A549 (cell line): ENCODE measurements at regions of chr15 and their contacts with region 1.

Region 1: GRCh38 chr15:58070801-58071418 is 5.4 kb upstream of the ALDH1A2 start:
- DNase-seq: peak; percentile 13 to 68
- ATAC-seq: peak in 1 of 2 experiments; percentile 30; a peak in 1 of 6 replicates
- H3K4me3 ChIP-seq: no peak overlapping the region
- H3K27ac ChIP-seq: no peak overlapping the region
- H3K4me1 ChIP-seq: peaks cover 2% of the 10 kb centered on the region; the same call in 1 of the 3 replicates
- CTCF ChIP-seq: peak; percentile 95
- EP300 ChIP-seq: no peak
- POLR2A ChIP-seq: no peak
- RAD21 ChIP-seq: peak; percentile 79 to 88

Region 2: DNA sequence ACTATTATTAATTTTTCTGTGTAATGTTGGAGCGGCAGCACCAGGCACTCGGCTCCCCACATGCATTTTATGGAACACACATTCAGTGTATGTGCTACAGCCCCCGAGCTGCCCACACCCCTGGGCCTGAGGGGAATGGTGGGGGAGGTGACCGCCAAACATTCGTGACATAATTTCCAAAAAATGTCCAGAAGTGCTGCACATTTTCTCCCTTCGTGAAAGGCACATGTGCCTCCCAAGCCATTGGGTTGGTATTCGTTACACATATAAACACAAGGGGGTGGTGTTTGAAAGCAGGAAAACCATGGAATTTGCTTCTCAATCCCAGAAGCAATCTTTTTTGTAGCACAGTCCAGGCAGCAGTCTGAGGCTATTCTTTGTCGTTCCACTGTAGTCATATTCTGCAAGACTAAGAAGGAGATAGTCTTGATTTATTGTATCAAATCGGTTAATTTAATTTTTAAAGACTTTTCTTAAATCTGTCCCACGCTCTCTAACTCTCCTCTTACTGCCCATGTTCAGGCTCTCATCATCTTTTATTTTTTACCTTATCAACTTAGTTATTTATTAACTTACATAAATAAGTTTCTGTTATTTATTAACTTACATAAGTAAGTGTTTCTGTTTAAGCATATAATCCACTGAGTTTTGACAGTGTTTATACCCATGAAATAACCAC is 403.6 kb before region 1 on chr15:
- CTCF ChIA-PET with region 1: interaction called, 11 read pairs
- POLR2A ChIA-PET with region 1: no interaction called
- DNase-seq: peak; percentile 65 to 75
- ATAC-seq: peak; percentile 82 to 92
- H3K4me3 ChIP-seq: no peak overlapping the region
- H3K27ac ChIP-seq: no peak overlapping the region
- H3K4me1 ChIP-seq: peaks cover 18% of the 10 kb centered on the region
- CTCF ChIP-seq: peak; percentile 68
- EP300 ChIP-seq: no peak
- POLR2A ChIP-seq: no peak
- RAD21 ChIP-seq: peak; percentile 78 to 80

Region 3: GRCh38 chr15:57743424-57743823 is 327.5 kb before region 1 on chr15:
- CTCF ChIA-PET with region 1: interaction called, 18 read pairs
- POLR2A ChIA-PET with region 1: no interaction called
- DNase-seq: peak in 1 of 2 experiments; percentile 27
- ATAC-seq: peak; percentile 57 to 67; a peak in 5 of 6 replicates
- H3K4me3 ChIP-seq: no peak overlapping the region
- H3K27ac ChIP-seq: no peak overlapping the region
- H3K4me1 ChIP-seq: no peaks in the 10 kb centered on the region
- CTCF ChIP-seq: 0 out of 3 replicates have a peak, but pooled peaks have one; percentile 16
- EP300 ChIP-seq: no peak
- POLR2A ChIP-seq: no peak
- RAD21 ChIP-seq: peak; percentile 13 to 48; a peak in 1 of 5 replicates

Region 4: DNA sequence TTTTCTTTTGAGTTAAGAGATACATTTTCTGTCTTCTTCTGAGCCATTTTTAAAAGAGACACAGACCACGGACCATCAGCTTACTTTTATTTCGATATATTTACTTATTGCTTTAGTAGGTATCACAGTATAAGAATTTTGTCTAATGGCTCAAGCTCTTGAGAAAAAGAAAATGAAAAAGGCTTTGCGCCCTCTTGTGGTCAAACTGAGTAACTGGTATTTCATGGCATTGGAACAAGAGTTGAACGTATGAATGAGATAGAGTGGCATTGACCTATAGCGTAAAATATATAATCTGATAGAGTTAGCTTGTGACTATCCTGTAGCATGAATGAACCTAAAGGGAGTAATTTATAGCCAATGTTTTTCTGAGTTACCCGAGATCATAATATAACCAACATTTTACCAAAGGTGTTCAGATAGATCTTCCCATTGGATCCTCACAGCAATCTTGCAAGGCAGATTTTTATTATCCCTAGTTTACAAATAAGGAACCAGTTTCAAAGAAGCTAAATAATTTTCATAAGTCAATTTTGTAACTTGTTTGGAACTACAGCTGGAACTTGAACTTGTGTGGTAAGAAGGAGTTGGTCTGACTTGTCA is 209.8 kb before region 1 on chr15:
- CTCF ChIA-PET with region 1: interaction called, 27 read pairs
- POLR2A ChIA-PET with region 1: no interaction called
- DNase-seq: peak; percentile 28 to 74
- ATAC-seq: peak; percentile 28 to 78; a peak in 3 of 6 replicates
- H3K4me3 ChIP-seq: no peak overlapping the region
- H3K27ac ChIP-seq: no peak overlapping the region
- H3K4me1 ChIP-seq: no peaks in the 10 kb centered on the region
- CTCF ChIP-seq: peak; percentile 94
- EP300 ChIP-seq: no peak
- POLR2A ChIP-seq: no peak
- RAD21 ChIP-seq: peak; percentile 63 to 73

Region 5: GRCh38 chr15:57969354-57969753 is 101.6 kb before region 1 on chr15:
- CTCF ChIA-PET with region 1: interaction called, 19 read pairs
- POLR2A ChIA-PET with region 1: no interaction called
- DNase-seq: peak in 1 of 2 experiments; percentile 27
- ATAC-seq: peak; percentile 41 to 76; a peak in 3 of 6 replicates
- H3K4me3 ChIP-seq: no peak overlapping the region
- H3K27ac ChIP-seq: no peak overlapping the region
- H3K4me1 ChIP-seq: no peaks in the 10 kb centered on the region
- CTCF ChIP-seq: 0 out of 3 replicates have a peak, but pooled peaks have one; percentile 10
- EP300 ChIP-seq: no peak
- POLR2A ChIP-seq: no peak
- RAD21 ChIP-seq: peak; percentile 20 to 48; a peak in 2 of 5 replicates

Region 6: DNA sequence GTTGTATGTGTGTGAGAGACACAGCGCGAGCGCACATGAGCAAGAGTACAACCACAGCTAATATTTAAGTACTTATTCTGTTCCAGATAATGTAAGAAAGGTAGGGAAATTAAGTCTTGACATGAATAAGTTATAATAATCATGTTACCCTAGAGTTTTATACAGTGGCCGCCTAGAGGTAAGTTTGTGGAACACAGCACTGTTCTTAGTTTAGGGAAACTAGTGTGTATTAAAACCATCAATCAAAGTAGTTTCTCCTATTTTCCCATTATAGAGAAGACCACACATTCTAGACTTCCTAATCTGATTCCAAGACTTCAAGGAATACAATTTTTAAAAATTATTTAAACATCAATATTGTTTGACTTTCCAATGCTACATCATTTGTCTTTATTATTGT is 14.9 kb before region 1 on chr15:
- CTCF ChIA-PET with region 1: interaction called, 32 read pairs
- POLR2A ChIA-PET with region 1: no interaction called
- DNase-seq: peak in 1 of 2 experiments; percentile 13
- ATAC-seq: peak; percentile 69 to 71; a peak in 3 of 6 replicates
- H3K4me3 ChIP-seq: no peak overlapping the region
- H3K27ac ChIP-seq: no peak overlapping the region
- H3K4me1 ChIP-seq: no peaks in the 10 kb centered on the region
- CTCF ChIP-seq: no peak
- EP300 ChIP-seq: no peak
- POLR2A ChIP-seq: no peak
- RAD21 ChIP-seq: no peak

Region 7: GRCh38 chr15:58171476-58172057 is 100.7 kb after region 1 on chr15:
- CTCF ChIA-PET with region 1: interaction called, 15 read pairs
- POLR2A ChIA-PET with region 1: no interaction called
- DNase-seq: no peak
- ATAC-seq: no peak
- H3K4me3 ChIP-seq: no peak overlapping the region
- H3K27ac ChIP-seq: no peak overlapping the region
- H3K4me1 ChIP-seq: no peaks in the 10 kb centered on the region
- CTCF ChIP-seq: no peak
- EP300 ChIP-seq: no peak
- POLR2A ChIP-seq: no peak
- RAD21 ChIP-seq: no peak

Region 8: DNA sequence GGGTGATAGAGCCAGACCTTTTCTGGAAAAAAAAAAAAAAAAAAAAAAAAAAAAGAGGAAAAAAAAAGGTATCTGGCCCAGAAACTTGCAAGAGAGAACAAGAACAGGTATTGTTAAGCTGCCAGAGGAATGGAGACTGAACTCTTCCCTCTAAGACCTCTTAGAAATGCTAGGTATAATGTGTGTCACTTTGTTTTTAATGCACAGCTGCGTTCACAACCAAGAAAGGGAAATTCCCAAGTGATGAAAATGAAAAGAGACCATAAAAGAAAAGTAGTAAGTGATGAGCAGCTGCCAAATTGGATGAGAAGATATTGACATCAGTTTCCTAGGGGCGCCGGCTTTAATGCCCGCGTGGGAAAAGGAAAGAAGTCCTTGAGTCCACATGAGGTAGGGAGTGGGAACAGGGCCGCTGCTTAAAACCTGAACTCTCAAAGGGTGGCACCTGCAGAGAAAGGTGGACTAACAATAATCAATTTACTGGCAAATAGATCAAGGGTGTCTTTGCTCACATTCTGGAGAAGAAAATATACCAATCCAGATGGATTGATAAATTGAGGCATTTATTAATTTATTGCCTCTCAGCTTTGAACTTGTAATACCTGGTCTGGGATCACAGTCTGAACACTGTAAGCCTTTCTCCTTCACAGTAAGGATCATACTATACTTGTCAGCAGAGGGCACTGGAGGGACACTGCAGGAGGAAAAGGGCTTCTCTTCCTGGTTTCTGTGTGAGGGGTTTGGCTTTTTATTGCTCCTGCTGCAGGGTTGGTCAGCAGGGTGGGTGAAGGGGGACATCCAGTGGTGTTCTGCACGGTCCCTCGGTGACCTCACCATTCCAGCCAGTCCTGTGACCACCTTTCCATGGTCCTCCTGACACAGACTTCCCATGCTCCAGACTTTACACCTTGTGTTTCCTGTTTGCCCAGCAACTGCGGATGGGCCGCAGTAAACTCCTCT is 198.8 kb after region 1 on chr15:
- CTCF ChIA-PET with region 1: no interaction called
- POLR2A ChIA-PET with region 1: no interaction called
- DNase-seq: peak; percentile 53 to 71
- ATAC-seq: peak; percentile 73 to 96; a peak in 5 of 6 replicates
- H3K4me3 ChIP-seq: no peak overlapping the region
- H3K27ac ChIP-seq: peak overlapping the region; percentile 36 to 72; a peak in 4 of 6 replicates
- H3K4me1 ChIP-seq: no peaks in the 10 kb centered on the region
- CTCF ChIP-seq: peak; percentile 72
- EP300 ChIP-seq: no peak
- POLR2A ChIP-seq: no peak
- RAD21 ChIP-seq: peak; percentile 90 to 94

Region 9: DNA sequence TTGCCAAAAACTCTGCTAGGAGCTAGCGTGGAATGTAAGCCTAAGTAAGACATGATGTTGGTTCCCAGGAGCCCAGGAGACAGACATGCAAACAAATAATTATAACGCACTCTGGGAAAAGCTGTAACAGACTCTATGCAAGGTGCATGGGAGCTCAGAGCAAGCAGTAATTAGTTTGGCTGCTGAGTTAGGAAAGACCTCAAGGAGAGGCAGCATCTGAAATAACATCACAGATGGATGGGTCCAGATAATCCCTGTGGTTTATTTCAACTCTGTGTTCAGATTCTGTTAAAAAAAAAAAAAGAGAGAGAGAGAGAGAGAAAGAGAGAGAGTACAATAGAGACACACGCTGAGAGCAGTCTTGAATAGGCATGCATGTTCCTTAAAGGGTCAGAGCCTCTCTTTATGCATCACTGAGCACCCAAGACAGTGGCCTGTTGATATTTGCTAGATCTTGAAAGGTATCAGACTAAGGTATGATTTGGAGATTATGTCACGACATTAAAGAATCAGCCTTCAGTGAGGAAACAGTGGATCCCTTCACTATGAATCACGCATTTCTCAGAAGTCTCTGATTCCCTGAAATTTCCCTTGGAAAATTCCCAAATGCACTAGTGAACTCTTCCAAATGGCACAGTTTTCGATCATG is 236.5 kb after region 1 on chr15:
- CTCF ChIA-PET with region 1: no interaction called
- POLR2A ChIA-PET with region 1: no interaction called
- DNase-seq: no peak
- ATAC-seq: 0 out of 6 replicates have a peak, but pooled peaks of 1 of the 2 experiments have one; percentile 16
- H3K4me3 ChIP-seq: no peak overlapping the region
- H3K27ac ChIP-seq: no peak overlapping the region
- H3K4me1 ChIP-seq: peaks cover 14% of the 10 kb centered on the region; the same call in 1 of the 3 replicates
- CTCF ChIP-seq: no peak
- EP300 ChIP-seq: no peak
- POLR2A ChIP-seq: no peak
- RAD21 ChIP-seq: no peak